Natural killer cell (primary cell): ENCODE measurements at regions of chrX and their contacts with region 1.

Region 1: GRCh38 chrX:153927922-153928760 is 2.1 kb upstream of the ARHGAP4 start:
- DNase-seq: peak; percentile 85 to 96
- ATAC-seq: peak; percentile 75 to 90 (median 81)
- H3K4me3 ChIP-seq: peak overlapping the region; percentile 85
- H3K4me3 Mint-ChIP-seq: peak overlapping the region; percentile 91
- H3K27ac ChIP-seq: peak overlapping the region; percentile 100
- H3K27ac Mint-ChIP-seq: peak overlapping the region; percentile 91 to 96
- H3K4me1 ChIP-seq: peaks cover 58% of the 10 kb centered on the region
- H3K4me1 Mint-ChIP-seq: peaks cover 28 to 48% of the 10 kb centered on the region in 2 donors
- H3K27me3 ChIP-seq: no peaks in the 10 kb centered on the region
- H3K27me3 Mint-ChIP-seq: no peaks in the 10 kb centered on the region
- CTCF ChIP-seq: no peak

Region 2: DNA sequence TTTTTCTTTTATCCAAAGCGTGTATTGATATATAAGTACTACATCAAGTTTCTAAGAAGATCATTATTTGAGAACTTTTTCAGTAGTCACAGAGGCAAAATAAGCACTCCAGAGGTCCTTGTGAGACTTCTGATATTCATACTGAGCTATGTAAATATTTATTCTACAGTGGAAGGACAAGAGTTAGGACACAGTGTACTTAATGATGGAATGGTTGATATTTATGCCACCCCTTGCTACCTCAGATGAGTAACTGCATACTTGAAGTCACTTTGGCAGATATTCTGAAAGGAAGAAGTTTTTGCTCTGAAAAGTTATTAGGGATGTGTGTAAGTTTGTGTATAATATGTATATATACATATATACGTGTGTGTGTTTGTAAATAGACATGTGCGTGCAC is 718.8 kb before region 1 on chrX:
- intact Hi-C with region 1: no loop called
- DNase-seq: no peak
- ATAC-seq: no peak
- H3K4me3 ChIP-seq: no peak overlapping the region
- H3K4me3 Mint-ChIP-seq: no peak overlapping the region
- H3K27ac ChIP-seq: no peak overlapping the region
- H3K27ac Mint-ChIP-seq: no peak overlapping the region
- H3K4me1 ChIP-seq: no peaks in the 10 kb centered on the region
- H3K4me1 Mint-ChIP-seq: no peaks in the 10 kb centered on the region
- H3K27me3 ChIP-seq: no peaks in the 10 kb centered on the region
- H3K27me3 Mint-ChIP-seq: peaks cover 15 to 57% of the 10 kb centered on the region in 2 donors
- CTCF ChIP-seq: no peak

Region 3: DNA sequence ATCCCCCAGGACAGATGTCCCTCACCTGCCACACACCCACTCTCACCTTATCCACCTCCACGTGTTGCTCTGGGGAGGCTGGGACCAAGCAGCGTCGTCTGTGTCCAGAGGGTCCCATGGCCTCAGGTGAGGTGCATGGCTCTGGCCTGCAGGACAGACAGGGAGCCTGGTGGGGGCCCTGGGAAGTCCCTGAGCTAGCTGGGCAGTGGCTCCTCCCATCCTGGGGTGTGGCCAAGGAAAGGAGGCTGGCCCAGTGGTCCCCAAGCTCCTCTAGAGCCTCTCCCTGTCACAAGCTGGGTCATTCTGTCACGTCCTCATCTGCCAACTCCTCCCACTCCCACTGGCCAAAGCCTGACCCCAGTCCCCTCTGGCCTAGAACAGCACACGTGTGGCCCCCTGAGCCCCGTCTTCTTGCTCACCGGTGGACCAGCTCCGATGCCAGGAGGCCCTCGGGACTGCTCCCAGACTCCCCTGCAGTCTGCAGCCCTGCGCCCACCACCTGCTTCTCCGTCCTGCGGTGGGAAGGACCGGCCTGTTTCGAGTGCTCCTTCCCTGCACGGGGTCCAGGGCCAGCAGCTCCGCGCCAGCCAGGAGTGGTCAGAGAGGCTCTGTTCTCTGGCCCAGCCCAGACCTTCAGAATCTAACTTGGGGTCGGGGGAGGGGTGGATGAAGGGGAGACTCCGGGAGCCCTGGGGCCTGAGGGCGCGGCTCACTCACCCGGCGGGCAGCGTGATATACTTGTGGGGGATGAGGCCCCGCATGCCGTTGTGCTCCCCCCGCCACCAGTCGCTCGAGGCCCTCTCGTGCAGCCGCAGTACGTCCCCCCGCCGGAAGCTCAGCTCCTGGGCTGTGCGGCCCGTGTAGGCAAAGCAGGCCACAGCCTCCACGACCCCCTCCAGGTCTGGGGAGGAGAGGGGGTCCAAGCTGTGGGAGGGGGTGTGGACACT is 18.8 kb before region 1 on chrX:
- intact Hi-C with region 1: loop called (anchors 2 kb)
- DNase-seq: no peak
- ATAC-seq: no peak
- H3K4me3 ChIP-seq: no peak overlapping the region
- H3K4me3 Mint-ChIP-seq: no peak overlapping the region
- H3K27ac ChIP-seq: no peak overlapping the region
- H3K27ac Mint-ChIP-seq: no peak overlapping the region
- H3K4me1 ChIP-seq: peaks cover 32% of the 10 kb centered on the region
- H3K4me1 Mint-ChIP-seq: peaks cover 15 to 29% of the 10 kb centered on the region in 2 donors
- H3K27me3 ChIP-seq: no peaks in the 10 kb centered on the region
- H3K27me3 Mint-ChIP-seq: no peaks in the 10 kb centered on the region
- CTCF ChIP-seq: no peak

Region 4: GRCh38 chrX:153947009-153947769 is 19.0 kb after region 1 on chrX:
- intact Hi-C with region 1: loop called (anchors 1 kb)
- DNase-seq: peak; percentile 43 to 88
- ATAC-seq: peak; percentile 74 to 86 (median 74)
- H3K4me3 ChIP-seq: no peak overlapping the region
- H3K4me3 Mint-ChIP-seq: peak overlapping the region; percentile 65
- H3K27ac ChIP-seq: peak overlapping the region; percentile 61
- H3K27ac Mint-ChIP-seq: peak overlapping the region; percentile 73 to 93
- H3K4me1 ChIP-seq: peaks cover 60% of the 10 kb centered on the region
- H3K4me1 Mint-ChIP-seq: peaks cover 11 to 25% of the 10 kb centered on the region in 2 donors
- H3K27me3 ChIP-seq: no peaks in the 10 kb centered on the region
- H3K27me3 Mint-ChIP-seq: no peaks in the 10 kb centered on the region
- CTCF ChIP-seq: peak; percentile 65

Region 5: GRCh38 chrX:153971450-153972367 is 43.6 kb after region 1 on chrX and contains the start of gene HCFC1:
- intact Hi-C with region 1: loop called (anchors 5 kb)
- DNase-seq: peak; percentile 85 to 93
- ATAC-seq: peak; percentile 50 to 71 (median 56)
- H3K4me3 ChIP-seq: peak within 1 kb of the TSS; percentile 97
- H3K4me3 Mint-ChIP-seq: peak within 1 kb of the TSS; percentile 100
- H3K27ac ChIP-seq: peak within 1 kb of the TSS; percentile 100
- H3K27ac Mint-ChIP-seq: peak within 1 kb of the TSS; percentile 99 to 100
- H3K4me1 ChIP-seq: peaks cover 50% of the 10 kb centered on the region
- H3K4me1 Mint-ChIP-seq: peaks cover 39 to 40% of the 10 kb centered on the region in 2 donors
- H3K27me3 ChIP-seq: no peaks in the 10 kb centered on the region
- H3K27me3 Mint-ChIP-seq: no peaks in the 10 kb centered on the region
- CTCF ChIP-seq: no peak
- total RNA-seq, gene HCFC1: 65.2 to 76.7 (median 67.5) TPM

Region 6: GRCh38 chrX:154097597-154098541 is 169.7 kb after region 1 on chrX and contains the start of gene MECP2:
- intact Hi-C with region 1: loop called (anchors 10 kb)
- DNase-seq: peak; percentile 84 to 92
- ATAC-seq: peak; percentile 87 to 96 (median 90)
- H3K4me3 ChIP-seq: peak within 1 kb of the TSS; percentile 82
- H3K4me3 Mint-ChIP-seq: peak within 1 kb of the TSS; percentile 94
- H3K27ac ChIP-seq: peak within 1 kb of the TSS; percentile 87
- H3K27ac Mint-ChIP-seq: peak within 1 kb of the TSS; percentile 88 to 94
- H3K4me1 ChIP-seq: peaks cover 31% of the 10 kb centered on the region
- H3K4me1 Mint-ChIP-seq: peaks cover 35 to 40% of the 10 kb centered on the region in 2 donors
- H3K27me3 ChIP-seq: no peaks in the 10 kb centered on the region
- H3K27me3 Mint-ChIP-seq: peaks cover 0 to 13% of the 10 kb centered on the region in 2 donors
- CTCF ChIP-seq: no peak
- total RNA-seq, gene MECP2: 177 to 198 (median 182) TPM